Heart right ventricle (tissue), 16 donors: ENCODE measurements at regions of chr16 and their contacts with region 1.

Region 1: GRCh38 chr16:21001262-21001661 is 100.7 kb downstream of the LYRM1 start:
- DNase-seq: no peak
- ATAC-seq: peak in 1 of 8 donors; percentile 35
- H3K4me3 ChIP-seq: no peak overlapping the region
- H3K27ac ChIP-seq: no peak overlapping the region
- H3K4me1 ChIP-seq: no peaks in the 10 kb centered on the region
- H3K27me3 ChIP-seq: no peaks in the 10 kb centered on the region
- CTCF ChIP-seq: peak in 7 of 9 donors; percentile 19 to 45 (median 32)

Region 2: DNA sequence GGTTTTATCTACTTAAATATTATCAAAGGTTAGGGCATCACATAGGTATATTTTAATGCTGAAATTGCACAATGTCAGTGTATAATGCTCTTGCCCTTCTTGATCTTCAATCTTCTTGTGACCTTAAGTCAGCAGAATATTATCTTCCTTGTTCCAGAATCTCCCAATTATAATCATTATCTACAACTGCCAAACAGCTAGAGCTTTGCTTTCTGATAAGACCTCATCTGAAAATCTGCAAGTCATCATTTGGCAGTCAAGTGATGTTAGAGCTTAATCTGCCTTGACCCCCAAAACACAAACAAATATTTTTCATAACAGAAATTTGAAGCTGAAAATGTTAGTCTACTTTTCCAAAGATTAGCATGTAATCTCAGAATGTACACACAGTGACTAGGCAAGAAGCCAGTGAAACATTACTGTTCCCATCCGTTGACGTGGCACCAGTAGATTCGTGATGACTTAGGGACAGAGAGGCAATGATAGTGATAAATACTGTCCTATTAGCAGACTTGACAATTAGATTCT is 175.2 kb before region 1 on chr16:
- intact Hi-C with region 1: no loop called
- DNase-seq: no peak
- ATAC-seq: no peak
- H3K4me3 ChIP-seq: no peak overlapping the region
- H3K27ac ChIP-seq: no peak overlapping the region
- H3K4me1 ChIP-seq: peaks cover 0 to 9% (median 0%) of the 10 kb centered on the region in 9 donors
- H3K27me3 ChIP-seq: no peaks in the 10 kb centered on the region
- CTCF ChIP-seq: no peak

Region 3: GRCh38 chr16:20952159-20952920 is 48.9 kb before region 1 on chr16:
- intact Hi-C with region 1: loop called in 1 of 10 experiments (anchors 5 kb)
- DNase-seq: no peak
- ATAC-seq: no peak
- H3K4me3 ChIP-seq: no peak overlapping the region
- H3K27ac ChIP-seq: no peak overlapping the region
- H3K4me1 ChIP-seq: no peaks in the 10 kb centered on the region
- H3K27me3 ChIP-seq: no peaks in the 10 kb centered on the region
- CTCF ChIP-seq: no peak

Region 4: DNA sequence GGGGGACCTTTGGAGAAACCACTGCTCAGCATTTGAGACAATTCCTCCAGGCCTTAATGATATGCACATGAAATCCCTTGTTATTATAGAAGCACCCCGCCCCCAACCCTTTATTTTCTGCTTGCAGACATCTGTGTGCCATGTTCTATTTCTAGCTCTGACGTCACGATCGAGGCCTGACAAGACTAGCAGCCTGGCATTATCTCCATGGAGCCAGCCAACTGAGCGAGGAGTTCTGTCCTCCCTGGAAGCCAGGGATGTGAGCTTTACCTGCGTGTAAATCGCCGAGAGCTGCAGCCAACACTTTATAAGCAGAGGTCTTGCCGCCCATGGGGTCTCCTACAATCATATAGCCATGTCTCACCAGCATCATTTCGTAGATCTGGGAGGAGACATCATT is 32.4 kb after region 1 on chr16:
- intact Hi-C with region 1: no loop called
- DNase-seq: peak; percentile 34 to 76
- ATAC-seq: peak in 7 of 8 donors; percentile 25 to 97 (median 93)
- H3K4me3 ChIP-seq: no peak overlapping the region
- H3K27ac ChIP-seq: peak overlapping the region in 5 of 10 donors; percentile 2 to 62 (median 39)
- H3K4me1 ChIP-seq: peaks cover 0 to 10% (median 0%) of the 10 kb centered on the region in 9 donors
- H3K27me3 ChIP-seq: no peaks in the 10 kb centered on the region
- CTCF ChIP-seq: no peak